H1 (cell line): ENCODE measurements at regions of chr1 and their contacts with region 1.

Region 1: DNA sequence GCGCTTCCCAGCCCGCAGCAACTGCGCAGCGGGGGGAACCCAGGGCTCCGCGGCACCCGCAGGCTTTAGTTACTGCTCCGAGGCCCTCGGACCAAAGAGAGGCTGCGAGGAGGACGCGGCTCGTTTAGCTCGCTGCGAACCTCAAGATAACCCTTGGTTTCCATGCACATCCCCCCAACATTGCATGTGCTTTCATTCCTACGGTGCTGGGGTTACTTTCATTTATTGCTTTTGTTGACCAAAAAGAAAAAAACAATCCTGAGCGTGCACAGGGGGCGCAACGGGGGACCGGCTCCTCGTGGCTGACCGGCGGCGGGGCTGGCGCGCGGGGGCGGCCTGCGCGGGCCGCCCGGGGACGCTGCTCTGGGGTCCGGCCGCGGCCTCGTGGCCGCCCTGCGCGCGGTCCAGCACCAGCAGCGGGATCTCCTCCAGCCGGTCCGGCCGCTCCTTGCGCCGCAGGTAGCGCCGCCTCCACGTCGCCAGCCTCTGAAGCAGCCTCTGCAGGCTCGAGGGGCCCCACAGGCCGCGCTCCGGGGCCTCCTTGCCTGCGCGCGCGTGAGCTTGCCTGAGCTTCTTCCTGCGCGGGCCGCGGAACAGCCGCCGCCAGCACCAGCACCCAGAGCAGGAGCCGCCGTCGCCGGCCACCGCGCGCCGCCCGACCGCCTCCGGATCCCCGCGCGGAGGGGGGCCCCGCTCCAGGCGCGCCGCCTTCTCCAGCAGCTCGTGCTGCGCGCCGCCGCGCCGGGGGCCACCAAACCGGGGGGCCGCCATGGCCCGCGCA is 77.4 kb downstream of the DESI2 start:
- DNase-seq: peak in 1 of 2 experiments; percentile 71
- H3K4me3 ChIP-seq: peak overlapping the region; percentile 22 to 57 (median 36)
- H3K27ac ChIP-seq: no peak overlapping the region; the same call in 1 of the 2 replicates
- H3K4me1 ChIP-seq: peaks cover 0 to 7% (median 4%) of the 10 kb centered on the region in 4 experiments; a peak in 6 of 7 replicates
- H3K27me3 ChIP-seq: peaks cover 0 to 7% (median 3%) of the 10 kb centered on the region in 4 experiments; a peak in 6 of 7 replicates
- CTCF ChIP-seq: no peak
- EP300 ChIP-seq: no peak; a peak in 1 of 3 replicates
- POLR2A ChIP-seq: no peak; a peak in 1 of 3 replicates
- RAD21 ChIP-seq: no peak

Region 2: GRCh38 chr1:244642526-244642925 is 87.8 kb before region 1 on chr1:
- CTCF ChIA-PET with region 1: no interaction called
- POLR2A ChIA-PET with region 1: no interaction called
- DNase-seq: no peak
- H3K4me3 ChIP-seq: no peak overlapping the region
- H3K27ac ChIP-seq: no peak overlapping the region
- H3K4me1 ChIP-seq: peaks cover 0 to 4% (median 1%) of the 10 kb centered on the region in 4 experiments; a peak in 1 of 7 replicates
- H3K27me3 ChIP-seq: no peaks in the 10 kb centered on the region
- CTCF ChIP-seq: no peak
- EP300 ChIP-seq: no peak
- POLR2A ChIP-seq: no peak
- RAD21 ChIP-seq: no peak

Region 3: GRCh38 chr1:244702620-244703019 is 27.7 kb before region 1 on chr1:
- CTCF ChIA-PET with region 1: no interaction called
- POLR2A ChIA-PET with region 1: no interaction called
- DNase-seq: no peak
- H3K4me3 ChIP-seq: no peak overlapping the region
- H3K27ac ChIP-seq: no peak overlapping the region
- H3K4me1 ChIP-seq: no peaks in the 10 kb centered on the region
- H3K27me3 ChIP-seq: no peaks in the 10 kb centered on the region
- CTCF ChIP-seq: no peak
- EP300 ChIP-seq: no peak
- POLR2A ChIP-seq: no peak
- RAD21 ChIP-seq: no peak

Region 4: DNA sequence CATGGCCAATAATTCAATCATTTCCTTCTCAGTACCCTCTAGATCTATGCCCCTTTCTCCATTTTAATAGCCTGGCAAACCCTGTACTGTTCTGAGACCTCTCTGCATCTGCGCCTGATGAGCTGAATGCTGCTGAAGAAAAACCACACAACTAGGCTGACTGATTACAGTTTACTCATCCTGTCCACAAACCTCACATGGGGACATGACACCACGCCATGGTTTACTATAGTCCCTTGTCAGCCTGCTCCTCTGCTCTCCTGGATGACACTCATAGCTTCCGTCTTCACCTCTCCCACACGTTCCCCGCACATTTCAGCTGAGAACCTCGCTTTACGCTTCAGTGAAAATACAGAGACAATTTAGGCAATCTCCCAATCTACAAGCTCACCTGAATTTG is 17.7 kb before region 1 on chr1:
- CTCF ChIA-PET with region 1: interaction called, 6 read pairs
- POLR2A ChIA-PET with region 1: interaction called, 11 read pairs
- DNase-seq: no peak
- H3K4me3 ChIP-seq: no peak overlapping the region
- H3K27ac ChIP-seq: no peak overlapping the region
- H3K4me1 ChIP-seq: no peaks in the 10 kb centered on the region; a peak in 1 of 7 replicates
- H3K27me3 ChIP-seq: no peaks in the 10 kb centered on the region
- CTCF ChIP-seq: no peak
- EP300 ChIP-seq: no peak
- POLR2A ChIP-seq: no peak
- RAD21 ChIP-seq: no peak